Activated CD4-positive, alpha-beta T cell treated with anti-CD3 and anti-CD28 coated beads for 36 hours (primary cell): ENCODE measurements at regions of chr13 and their contacts with region 1.

Region 1: GRCh38 chr13:52128714-52129700 is at the start of gene NEK5:
- DNase-seq: peak; percentile 76
- ATAC-seq: peak; percentile 82
- H3K4me3 Mint-ChIP-seq: peak within 1 kb of the TSS; percentile 77
- H3K27ac Mint-ChIP-seq: peak within 1 kb of the TSS; percentile 34
- H3K4me1 Mint-ChIP-seq: peaks cover 21% of the 10 kb centered on the region
- H3K27me3 Mint-ChIP-seq: peaks cover 6% of the 10 kb centered on the region
- total RNA-seq, gene NEK5: 0.16 to 0.44 TPM

Region 2: GRCh38 chr13:51125498-51126226 is 1003.3 kb before region 1 on chr13:
- CTCF ChIA-PET with region 1: interaction called, 6 read pairs
- POLR2A ChIA-PET with region 1: no interaction called
- intact Hi-C with region 1: loop called in 1 of 2 experiments (anchors 5 kb)
- DNase-seq: peak; percentile 74
- ATAC-seq: peak; percentile 82
- H3K4me3 Mint-ChIP-seq: no peak overlapping the region
- H3K27ac Mint-ChIP-seq: no peak overlapping the region
- H3K4me1 Mint-ChIP-seq: peaks cover 11% of the 10 kb centered on the region
- H3K27me3 Mint-ChIP-seq: peaks cover 15% of the 10 kb centered on the region

Region 3: GRCh38 chr13:51814825-51815650 is 314.0 kb before region 1 on chr13:
- CTCF ChIA-PET with region 1: interaction called, 21 read pairs
- POLR2A ChIA-PET with region 1: no interaction called
- intact Hi-C with region 1: loop called (anchors 1 kb)
- DNase-seq: peak; percentile 83
- ATAC-seq: peak; percentile 70
- H3K4me3 Mint-ChIP-seq: peak overlapping the region; percentile 56
- H3K27ac Mint-ChIP-seq: peak overlapping the region; percentile 83
- H3K4me1 Mint-ChIP-seq: peaks cover 81% of the 10 kb centered on the region
- H3K27me3 Mint-ChIP-seq: no peaks in the 10 kb centered on the region

Region 4: DNA sequence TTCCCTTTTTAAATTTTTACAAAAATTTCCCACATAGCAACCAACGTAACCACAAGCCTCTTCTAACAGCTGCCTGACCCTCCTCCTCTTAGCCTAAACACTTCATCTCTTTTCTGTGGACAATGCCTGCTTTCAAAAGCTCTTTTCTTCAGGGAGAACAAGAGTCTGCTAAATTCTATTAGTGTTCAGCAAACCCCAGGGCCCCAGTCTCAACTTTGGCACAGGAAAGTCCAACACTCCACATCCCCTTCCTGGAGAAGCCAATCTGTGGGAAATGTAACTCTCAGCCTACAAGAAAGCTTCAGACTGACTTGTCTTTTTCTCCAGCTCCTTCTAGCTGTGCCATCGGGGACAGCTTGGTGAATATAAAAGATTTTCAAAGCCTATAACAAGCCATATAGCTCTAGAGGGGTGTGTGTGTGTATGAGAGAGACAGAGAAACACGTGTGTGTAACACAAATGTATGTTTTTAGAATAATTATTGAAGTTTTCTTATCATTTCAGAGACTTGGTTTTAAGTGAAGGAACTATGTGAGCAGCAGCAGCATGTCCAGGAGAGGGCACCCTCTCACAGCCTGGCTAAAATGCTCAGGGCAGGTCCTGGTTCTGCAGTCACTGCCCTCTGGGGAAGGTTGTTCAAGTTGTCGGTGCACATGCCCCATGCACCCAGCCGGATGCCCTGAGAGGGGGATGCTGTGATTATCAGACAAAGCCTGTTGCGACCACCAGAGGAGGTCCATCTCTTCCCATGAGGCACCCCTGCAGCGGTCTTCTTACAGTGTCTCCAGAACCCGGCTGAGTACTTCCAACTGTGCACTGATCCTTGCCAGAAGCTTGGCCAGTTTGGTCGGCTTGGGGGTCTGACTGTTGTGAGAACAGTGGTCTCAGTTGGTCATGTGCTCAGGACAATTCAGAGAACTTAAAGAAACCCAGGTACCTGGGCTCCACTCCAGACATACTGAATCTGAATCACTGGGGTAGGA is 232.8 kb before region 1 on chr13:
- CTCF ChIA-PET with region 1: interaction called, 16 read pairs
- POLR2A ChIA-PET with region 1: no interaction called
- intact Hi-C with region 1: loop called (anchors 1 kb)
- DNase-seq: peak; percentile 69
- ATAC-seq: peak; percentile 78
- H3K4me3 Mint-ChIP-seq: no peak overlapping the region
- H3K27ac Mint-ChIP-seq: no peak overlapping the region
- H3K4me1 Mint-ChIP-seq: no peaks in the 10 kb centered on the region
- H3K27me3 Mint-ChIP-seq: peaks cover 5% of the 10 kb centered on the region

Region 5: GRCh38 chr13:51945149-51945548 is 183.9 kb before region 1 on chr13:
- CTCF ChIA-PET with region 1: no interaction called
- POLR2A ChIA-PET with region 1: no interaction called
- intact Hi-C with region 1: no loop called
- DNase-seq: no peak
- ATAC-seq: no peak
- H3K4me3 Mint-ChIP-seq: no peak overlapping the region
- H3K27ac Mint-ChIP-seq: no peak overlapping the region
- H3K4me1 Mint-ChIP-seq: peaks cover 38% of the 10 kb centered on the region
- H3K27me3 Mint-ChIP-seq: no peaks in the 10 kb centered on the region

Region 6: DNA sequence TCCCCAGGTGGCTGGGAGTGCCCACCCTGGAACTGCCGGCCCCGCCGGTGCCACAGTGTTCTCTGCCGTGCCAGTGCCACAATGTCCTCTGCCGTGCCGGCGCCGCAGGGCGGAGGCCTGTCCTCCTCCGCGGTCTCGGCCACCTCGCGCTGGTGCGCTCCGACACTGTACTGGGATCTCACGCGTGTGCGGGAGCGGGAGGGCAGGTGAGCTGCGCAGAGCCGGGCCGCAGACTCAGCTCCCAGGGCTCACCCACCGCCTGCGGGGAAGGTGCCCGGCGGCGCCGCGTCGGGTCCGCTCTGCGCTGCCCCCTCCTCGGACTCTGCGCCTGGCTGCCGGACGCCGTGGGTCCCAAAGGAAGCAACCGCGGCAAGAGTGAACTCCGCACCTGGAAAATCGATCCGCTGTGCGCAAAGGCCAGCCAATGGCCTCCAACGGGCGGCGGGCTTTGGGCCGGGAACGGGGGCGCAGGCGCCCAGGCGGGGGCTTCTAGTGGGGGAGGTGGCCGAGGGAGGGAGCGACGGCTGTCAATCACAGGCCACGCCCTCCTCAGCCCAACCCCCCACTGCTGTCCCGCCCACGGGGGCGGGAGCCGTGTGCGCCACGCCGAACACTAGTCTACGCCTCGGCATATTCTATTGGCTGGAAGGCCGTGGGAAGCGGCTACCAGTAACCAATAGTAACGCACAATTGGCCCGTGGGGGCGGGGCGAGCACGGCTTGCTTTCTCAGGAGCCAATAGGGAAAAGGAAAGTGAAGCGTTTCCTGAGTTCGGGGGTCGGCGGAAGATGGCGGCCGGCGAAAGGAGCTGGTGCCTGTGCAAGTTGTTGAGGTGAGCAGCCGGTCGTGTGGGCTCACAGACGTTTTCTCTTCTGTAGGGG is 117.1 kb before region 1 on chr13 and contains the start of gene ALG11:
- CTCF ChIA-PET with region 1: interaction called, 5 read pairs
- POLR2A ChIA-PET with region 1: no interaction called
- intact Hi-C with region 1: loop called in 1 of 2 experiments (anchors 1 kb)
- DNase-seq: peak; percentile 100
- ATAC-seq: peak; percentile 99
- H3K4me3 Mint-ChIP-seq: peak within 1 kb of the TSS; percentile 100
- H3K27ac Mint-ChIP-seq: peak within 1 kb of the TSS; percentile 91
- H3K4me1 Mint-ChIP-seq: peaks cover 20% of the 10 kb centered on the region
- H3K27me3 Mint-ChIP-seq: peaks cover 17% of the 10 kb centered on the region
- total RNA-seq, gene ALG11: 14.1 to 18.1 TPM

Region 7: GRCh38 chr13:52159321-52160086 is 30.5 kb after region 1 on chr13 and contains the start of gene NEK3:
- CTCF ChIA-PET with region 1: interaction called, 5 read pairs
- POLR2A ChIA-PET with region 1: no interaction called
- intact Hi-C with region 1: loop called in 1 of 2 experiments (anchors 2 kb)
- DNase-seq: peak; percentile 77
- ATAC-seq: peak; percentile 80
- H3K4me3 Mint-ChIP-seq: peak within 1 kb of the TSS; percentile 78
- H3K27ac Mint-ChIP-seq: peak within 1 kb of the TSS; percentile 85
- H3K4me1 Mint-ChIP-seq: peaks cover 30% of the 10 kb centered on the region
- H3K27me3 Mint-ChIP-seq: no peaks in the 10 kb centered on the region
- total RNA-seq, gene NEK3: 10.5 to 12.0 TPM

Region 8: DNA sequence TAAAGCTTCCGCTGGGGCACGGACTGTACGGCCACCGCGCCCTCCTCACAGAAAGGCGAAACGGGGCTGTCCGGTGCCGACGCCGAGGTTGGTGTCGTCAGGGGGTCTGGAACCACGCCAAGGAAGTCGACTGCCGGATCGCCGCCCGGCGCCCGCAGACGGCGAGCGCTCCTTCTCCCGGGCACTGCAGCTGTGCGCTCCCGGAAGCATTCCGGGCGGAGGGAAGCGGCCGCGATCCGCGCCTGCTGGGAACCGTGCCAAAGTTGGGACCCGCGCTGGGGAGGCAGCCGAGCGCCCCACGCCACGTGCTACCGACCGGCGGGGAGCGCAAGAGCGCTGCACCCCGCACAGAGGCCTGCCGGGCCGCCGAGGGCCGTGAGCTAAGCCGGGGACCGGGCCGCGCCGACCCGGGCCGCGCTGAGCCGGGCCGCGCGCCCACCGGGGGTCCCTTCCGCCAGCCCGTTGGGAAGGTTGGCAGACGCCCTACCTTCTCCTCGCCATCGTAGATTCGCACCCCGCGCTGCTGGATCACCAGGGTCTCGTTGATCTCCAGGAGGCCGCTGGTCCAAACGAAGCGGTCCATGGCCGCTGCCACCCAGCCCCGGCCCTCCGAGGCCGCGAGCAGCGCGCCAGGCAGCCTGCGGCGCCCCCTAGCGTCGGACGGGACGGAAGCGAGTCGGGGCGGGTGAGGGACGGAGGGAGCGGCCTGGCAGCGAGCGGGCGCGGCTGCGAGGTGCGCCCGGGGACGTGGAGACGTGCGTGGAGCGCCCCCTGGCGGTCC is 321.2 kb after region 1 on chr13 and contains the start of gene VPS36:
- CTCF ChIA-PET with region 1: interaction called, 6 read pairs
- POLR2A ChIA-PET with region 1: no interaction called
- intact Hi-C with region 1: loop called in 1 of 2 experiments (anchors 1 kb)
- DNase-seq: peak; percentile 96
- ATAC-seq: peak; percentile 77
- H3K4me3 Mint-ChIP-seq: peak within 1 kb of the TSS; percentile 88
- H3K27ac Mint-ChIP-seq: peak within 1 kb of the TSS; percentile 91
- H3K4me1 Mint-ChIP-seq: peaks cover 35% of the 10 kb centered on the region
- H3K27me3 Mint-ChIP-seq: peaks cover under 1% of the 10 kb centered on the region
- total RNA-seq, gene VPS36: 27.4 to 29.8 TPM